Dorsolateral prefrontal cortex (tissue), 120 donors: ENCODE measurements at regions of chr19 and their contacts with region 1.

Region 1: GRCh38 chr19:28466107-28467045 is 746.6 kb downstream of the UQCRFS1 start:
- DNase-seq: peak in 6 of 10 donors; percentile 29 to 63 (median 46)
- H3K4me3 ChIP-seq: no peak overlapping the region
- H3K27ac ChIP-seq: no peak overlapping the region
- H3K27me3 ChIP-seq: peaks cover 0 to 28% (median 0%) of the 10 kb centered on the region in 45 donors
- CTCF ChIP-seq: peak; percentile 64 to 92 (median 82)

Region 2: DNA sequence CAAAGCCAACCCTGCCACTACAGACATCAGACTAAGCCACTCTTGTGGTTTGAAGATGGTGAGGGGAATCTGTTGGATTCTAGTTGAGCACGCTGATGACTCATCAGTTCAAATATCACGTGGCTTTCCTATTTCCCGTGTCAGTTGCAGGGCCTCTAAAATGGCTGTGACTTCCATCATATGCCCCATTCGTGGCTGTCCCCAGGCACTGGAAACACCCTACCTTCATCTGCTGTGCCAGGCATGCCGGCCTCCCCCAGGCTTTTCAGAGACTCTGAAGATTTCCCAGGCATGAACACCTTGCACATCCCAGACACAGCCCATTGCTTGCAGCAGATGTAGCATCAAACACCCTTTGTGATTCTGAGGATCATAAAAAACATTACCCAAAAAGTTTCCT is 86.6 kb after region 1 on chr19:
- intact Hi-C with region 1: no loop called
- DNase-seq: no peak
- H3K4me3 ChIP-seq: no peak overlapping the region
- H3K27ac ChIP-seq: no peak overlapping the region
- H3K27me3 ChIP-seq: no peaks in the 10 kb centered on the region
- CTCF ChIP-seq: no peak

Region 3: DNA sequence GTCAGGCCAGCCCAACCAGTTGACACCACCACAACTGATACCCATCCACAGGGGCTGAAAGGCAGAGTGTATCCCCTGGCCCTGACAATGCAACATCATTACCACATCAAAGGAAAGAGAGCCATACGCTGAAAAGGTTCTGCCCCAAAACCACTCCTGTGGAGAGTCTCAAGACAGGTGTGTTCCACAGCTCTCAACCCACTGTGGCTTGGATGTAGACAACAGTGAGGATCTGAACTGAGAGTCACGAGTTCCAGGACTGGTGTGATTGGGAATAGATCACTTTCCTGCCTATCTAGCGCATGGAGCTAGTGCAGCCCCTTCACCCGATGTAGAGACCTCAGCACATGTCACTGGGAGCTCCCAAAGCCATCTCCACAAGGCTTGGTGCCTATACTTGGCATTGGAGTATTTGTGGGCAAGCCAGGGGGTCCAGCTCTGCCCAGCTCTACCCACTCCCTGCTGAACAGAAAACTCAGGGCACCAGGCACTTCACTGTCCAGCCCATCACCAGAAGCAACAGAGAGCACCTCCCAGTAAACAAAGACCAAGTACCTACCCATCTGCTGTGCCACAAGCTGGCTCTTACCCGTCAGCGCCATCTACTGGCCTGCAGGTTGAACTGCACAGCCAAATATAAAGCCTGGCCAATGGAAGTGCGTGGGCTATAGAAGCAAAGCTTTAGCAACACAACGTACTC is 167.1 kb after region 1 on chr19:
- intact Hi-C with region 1: loop called in 1 of 2 experiments (anchors 5 kb)
- DNase-seq: no peak
- H3K4me3 ChIP-seq: no peak overlapping the region
- H3K27ac ChIP-seq: no peak overlapping the region
- H3K27me3 ChIP-seq: no peaks in the 10 kb centered on the region
- CTCF ChIP-seq: peak; percentile 29 to 74 (median 58)

Region 4: DNA sequence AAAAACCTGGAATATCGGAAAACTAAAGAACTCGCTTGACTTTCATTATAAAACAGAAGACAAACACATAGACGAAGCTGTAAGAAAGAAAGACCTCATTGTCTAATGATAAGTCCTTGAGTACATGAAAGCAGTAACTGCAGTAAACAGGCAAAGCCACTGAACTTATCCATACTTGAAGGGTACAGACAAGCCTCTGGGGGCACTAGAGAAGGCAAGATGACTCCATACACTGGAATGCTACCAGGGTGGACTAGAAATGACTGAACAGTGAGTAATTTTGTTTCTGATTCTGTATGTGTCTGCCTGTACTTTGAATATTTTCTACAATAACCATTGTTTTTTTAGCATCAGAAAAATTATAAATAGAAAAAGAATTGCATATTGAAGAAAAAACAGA is 238.6 kb after region 1 on chr19:
- intact Hi-C with region 1: loop called (anchors 5 kb)
- DNase-seq: no peak
- H3K4me3 ChIP-seq: no peak overlapping the region
- H3K27ac ChIP-seq: no peak overlapping the region
- H3K27me3 ChIP-seq: no peaks in the 10 kb centered on the region
- CTCF ChIP-seq: peak in 6 of 56 donors; percentile 7 to 25 (median 18)

Region 5: GRCh38 chr19:28710278-28710677 is 243.9 kb after region 1 on chr19:
- intact Hi-C with region 1: loop called (anchors 5 kb)
- DNase-seq: no peak
- H3K4me3 ChIP-seq: no peak overlapping the region
- H3K27ac ChIP-seq: no peak overlapping the region
- H3K27me3 ChIP-seq: peaks cover 0 to 7% (median 0%) of the 10 kb centered on the region in 45 donors
- CTCF ChIP-seq: peak; percentile 72 to 99 (median 85)

Region 6: DNA sequence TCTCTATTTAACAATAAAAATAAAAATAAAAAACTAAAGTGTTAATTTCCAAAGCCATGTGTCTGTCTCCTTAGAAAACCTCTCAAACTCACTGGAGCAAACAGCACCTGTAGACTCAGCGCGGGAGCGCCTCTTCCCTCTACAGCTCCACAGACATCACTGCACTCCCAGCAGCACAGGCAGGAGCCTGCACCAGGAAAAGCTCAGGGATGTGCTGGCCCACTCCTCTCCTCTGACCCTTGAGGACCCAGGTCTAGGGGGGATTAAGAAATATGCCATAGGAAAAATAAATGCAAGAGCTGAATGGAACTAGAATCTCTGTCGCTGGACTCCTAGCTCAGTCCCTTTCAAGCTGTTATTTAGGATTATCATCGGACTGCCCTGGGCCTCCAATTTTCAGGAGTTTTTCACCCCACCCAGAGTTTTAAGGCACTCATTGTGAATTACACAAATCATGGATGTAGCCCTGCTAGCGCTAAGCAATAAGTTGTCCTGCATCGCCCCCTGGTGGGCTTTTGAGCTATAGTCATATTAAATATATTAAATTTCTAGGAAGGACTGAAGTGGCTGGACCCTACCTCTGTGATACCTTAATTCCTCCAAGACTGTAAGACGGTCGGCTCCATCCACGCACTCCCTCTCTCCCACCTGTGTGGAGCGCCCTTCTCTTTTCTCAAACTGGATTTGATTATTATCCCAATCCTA is 412.6 kb after region 1 on chr19:
- intact Hi-C with region 1: loop called (anchors 5 to 10 kb)
- DNase-seq: peak; percentile 60 to 87 (median 67)
- H3K4me3 ChIP-seq: no peak overlapping the region
- H3K27ac ChIP-seq: no peak overlapping the region
- H3K27me3 ChIP-seq: no peaks in the 10 kb centered on the region
- CTCF ChIP-seq: peak; percentile 64 to 97 (median 81)